GM10248 (cell line): ENCODE measurements at regions of chr12 and their contacts with region 1.

Region 1: GRCh38 chr12:91931111-91931510 is 214.5 kb downstream of the BTG1 start:
- DNase-seq: no peak
- CTCF ChIP-seq: no peak

Region 2: DNA sequence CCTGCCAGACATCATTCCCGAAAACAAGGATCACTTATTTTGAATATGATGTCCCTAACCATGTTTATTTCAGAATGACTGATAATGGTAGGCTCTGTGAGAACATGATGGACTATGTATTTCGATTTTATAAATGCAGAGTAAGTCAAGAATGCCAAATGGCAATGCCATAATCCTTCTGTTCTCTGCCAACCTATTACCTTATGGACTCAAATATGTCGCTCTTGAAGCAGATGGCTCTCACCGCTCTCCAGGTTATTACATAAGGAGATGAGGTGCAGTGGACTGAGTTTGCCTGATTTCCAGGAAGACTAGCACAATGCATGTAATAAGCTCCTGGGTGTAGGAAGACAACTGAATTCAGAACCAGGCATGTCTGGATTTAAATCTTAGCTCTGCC is 12.7 kb before region 1 on chr12:
- CTCF ChIA-PET with region 1: interaction called, 14 read pairs
- POLR2A ChIA-PET with region 1: no interaction called
- DNase-seq: no peak
- CTCF ChIP-seq: no peak

Region 3: DNA sequence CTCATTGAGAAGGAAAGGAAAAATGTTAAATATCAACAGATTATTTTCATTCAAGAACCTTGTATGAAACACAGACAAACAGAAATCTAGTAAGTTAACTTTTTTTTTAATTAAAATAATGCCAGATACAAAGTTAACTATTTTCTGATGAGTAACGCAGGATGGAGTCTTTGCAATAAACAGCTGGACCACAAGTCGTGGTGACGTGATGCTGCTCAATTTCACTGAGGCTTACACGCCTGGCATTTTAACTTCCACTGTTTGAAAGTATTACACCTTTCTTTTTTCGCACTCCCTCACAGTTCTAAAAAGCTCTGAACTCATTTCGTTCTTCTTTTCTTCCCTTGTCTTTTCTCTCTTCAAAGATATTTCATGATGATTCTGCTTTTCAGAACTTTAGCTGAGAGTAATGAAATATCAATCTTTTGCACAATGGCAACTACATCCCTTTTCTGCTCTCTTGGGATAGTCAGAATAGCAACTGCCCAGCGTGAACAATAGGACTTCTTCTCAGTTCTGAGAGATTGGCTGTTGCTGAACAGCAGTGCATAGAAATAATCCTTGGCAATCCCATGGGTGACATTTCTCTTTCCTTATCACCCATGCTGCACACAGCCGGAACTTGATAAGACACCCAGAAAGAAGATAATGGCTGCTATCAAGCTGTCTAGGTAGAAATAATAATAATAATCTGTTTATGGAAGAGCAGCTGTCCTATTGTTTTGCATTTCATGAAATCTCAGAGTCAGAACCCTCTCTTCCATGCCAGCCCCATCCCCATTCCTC is 54.1 kb after region 1 on chr12:
- CTCF ChIA-PET with region 1: no interaction called
- POLR2A ChIA-PET with region 1: no interaction called
- DNase-seq: no peak
- CTCF ChIP-seq: no peak